PC-3 (cell line): ENCODE measurements at regions of chr6 and their contacts with region 1.

Region 1: DNA sequence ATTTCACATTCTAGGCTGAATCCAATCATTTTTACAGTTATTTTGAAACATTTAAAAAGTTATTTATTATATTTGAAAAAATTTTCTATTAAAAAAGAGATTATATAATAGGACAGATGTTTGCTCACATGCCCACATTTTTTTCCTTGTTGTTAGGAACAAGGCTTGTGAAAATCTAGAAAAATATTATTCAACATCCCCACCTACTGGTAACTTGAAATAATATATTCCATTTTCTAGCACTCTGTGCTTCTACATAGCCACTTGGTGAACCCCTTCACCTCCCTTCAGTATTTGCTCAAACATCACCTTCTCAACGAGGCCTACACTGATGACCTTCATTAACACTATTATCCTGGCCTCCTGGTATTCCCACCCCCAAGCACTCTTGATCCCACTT is 18.3 kb upstream of the GPRC6A start:
- DNase-seq: peak; percentile 60
- ATAC-seq: peak; percentile 56
- H3K4me3 ChIP-seq: no peak overlapping the region
- H3K27ac ChIP-seq: no peak overlapping the region
- H3K4me1 ChIP-seq: no peaks in the 10 kb centered on the region
- H3K27me3 ChIP-seq: no peaks in the 10 kb centered on the region
- CTCF ChIP-seq: peak; percentile 38; the same call in 1 of the 2 replicates

Region 2: GRCh38 chr6:116370760-116371119 is 476.5 kb before region 1 on chr6 and contains the start of gene DSE:
- CTCF ChIA-PET with region 1: no interaction called
- POLR2A ChIA-PET with region 1: no interaction called
- intact Hi-C with region 1: no loop called
- DNase-seq: peak; percentile 30
- ATAC-seq: peak; percentile 66
- H3K4me3 ChIP-seq: peak within 1 kb of the TSS; percentile 84
- H3K27ac ChIP-seq: peak within 1 kb of the TSS; percentile 53
- H3K4me1 ChIP-seq: no peaks in the 10 kb centered on the region
- H3K27me3 ChIP-seq: no peaks in the 10 kb centered on the region
- CTCF ChIP-seq: no peak
- total RNA-seq, gene DSE: 9.6 and 9.8 TPM in 2 replicates

Region 3: DNA sequence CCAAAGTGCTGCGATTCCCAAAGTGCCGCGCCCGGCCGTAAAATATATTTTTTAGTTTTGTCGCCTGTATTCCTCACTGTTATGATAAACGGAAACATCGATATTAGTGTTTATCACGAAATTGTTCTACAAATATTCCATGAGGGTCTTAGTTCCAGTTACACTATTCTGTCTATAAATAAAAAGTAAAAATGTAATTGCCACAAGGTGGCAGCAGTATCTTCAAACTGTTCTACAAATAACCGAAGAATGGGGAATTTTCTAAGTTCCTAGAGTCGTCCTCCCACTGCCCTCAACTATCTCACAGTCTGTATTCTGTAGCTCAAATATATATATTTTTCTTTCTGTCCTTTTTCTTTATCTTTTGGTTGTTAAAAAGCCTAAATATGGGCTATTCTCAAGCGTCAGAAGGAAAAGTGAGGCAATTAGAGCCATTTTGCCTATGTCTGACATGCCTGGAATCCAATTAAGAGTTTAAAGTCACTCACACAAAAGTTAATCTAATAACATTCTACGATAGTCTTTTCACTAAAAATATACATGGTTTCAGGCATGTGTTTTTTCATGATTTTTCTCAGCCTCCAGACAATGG is 67.6 kb before region 1 on chr6:
- CTCF ChIA-PET with region 1: no interaction called
- POLR2A ChIA-PET with region 1: no interaction called
- intact Hi-C with region 1: loop called (anchors 1 kb)
- DNase-seq: peak; percentile 67
- ATAC-seq: peak; percentile 43; the same call in 1 of the 2 replicates
- H3K4me3 ChIP-seq: no peak overlapping the region
- H3K27ac ChIP-seq: no peak overlapping the region
- H3K4me1 ChIP-seq: no peaks in the 10 kb centered on the region
- H3K27me3 ChIP-seq: no peaks in the 10 kb centered on the region
- CTCF ChIP-seq: peak; percentile 61

Region 4: GRCh38 chr6:116836606-116837342 is 10.5 kb before region 1 on chr6:
- CTCF ChIA-PET with region 1: no interaction called
- POLR2A ChIA-PET with region 1: no interaction called
- intact Hi-C with region 1: no loop called
- DNase-seq: no peak
- ATAC-seq: no peak
- H3K4me3 ChIP-seq: no peak overlapping the region
- H3K27ac ChIP-seq: no peak overlapping the region
- H3K4me1 ChIP-seq: no peaks in the 10 kb centered on the region
- H3K27me3 ChIP-seq: no peaks in the 10 kb centered on the region
- CTCF ChIP-seq: no peak

Region 5: DNA sequence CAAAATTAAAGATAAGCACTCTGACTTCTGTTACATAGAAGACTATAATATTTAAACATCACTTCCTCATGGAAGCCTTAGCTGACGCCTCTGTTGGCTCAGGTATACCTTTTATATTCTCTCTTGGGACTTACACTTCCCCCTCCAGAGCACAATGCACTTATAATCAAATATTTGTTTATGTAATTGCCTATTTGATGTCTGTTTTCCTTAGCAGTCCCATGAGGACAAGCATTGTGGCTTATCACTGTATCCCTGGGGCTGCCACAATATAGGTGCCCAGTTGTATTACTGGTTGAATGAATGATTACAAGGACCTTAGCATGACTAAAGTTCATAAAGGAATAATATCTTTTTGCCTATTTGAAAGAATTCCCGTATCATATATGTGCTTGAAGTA is 231.4 kb after region 1 on chr6:
- CTCF ChIA-PET with region 1: no interaction called
- POLR2A ChIA-PET with region 1: no interaction called
- intact Hi-C with region 1: no loop called
- DNase-seq: no peak
- ATAC-seq: no peak
- H3K4me3 ChIP-seq: no peak overlapping the region
- H3K27ac ChIP-seq: no peak overlapping the region
- H3K4me1 ChIP-seq: no peaks in the 10 kb centered on the region
- H3K27me3 ChIP-seq: no peaks in the 10 kb centered on the region
- CTCF ChIP-seq: no peak